ENCODE measurements at regions of chr11 and their contacts with region 1.

Region 1: GRCh38 chr11:67572747-67573419 is 10.7 kb upstream of the GSTP1 start:
- DNase-seq: peak; percentile 84
- ATAC-seq: peak; percentile 89
- H3K4me3 ChIP-seq: 0 out of 2 replicates have a peak overlapping the region, but pooled peaks have one; percentile 13
- H3K27ac ChIP-seq: no peak overlapping the region
- H3K4me1 ChIP-seq: peaks cover 10% of the 10 kb centered on the region
- H3K27me3 ChIP-seq: no peaks in the 10 kb centered on the region
- CTCF ChIP-seq: peak; percentile 76

Region 2: GRCh38 chr11:67539550-67539949 is 33.3 kb before region 1 on chr11:
- CTCF ChIA-PET with region 1: no interaction called
- POLR2A ChIA-PET with region 1: no interaction called
- intact Hi-C with region 1: no loop called
- DNase-seq: no peak
- ATAC-seq: no peak
- H3K4me3 ChIP-seq: no peak overlapping the region
- H3K27ac ChIP-seq: no peak overlapping the region
- H3K4me1 ChIP-seq: no peaks in the 10 kb centered on the region
- H3K27me3 ChIP-seq: no peaks in the 10 kb centered on the region
- CTCF ChIP-seq: no peak

Region 3: DNA sequence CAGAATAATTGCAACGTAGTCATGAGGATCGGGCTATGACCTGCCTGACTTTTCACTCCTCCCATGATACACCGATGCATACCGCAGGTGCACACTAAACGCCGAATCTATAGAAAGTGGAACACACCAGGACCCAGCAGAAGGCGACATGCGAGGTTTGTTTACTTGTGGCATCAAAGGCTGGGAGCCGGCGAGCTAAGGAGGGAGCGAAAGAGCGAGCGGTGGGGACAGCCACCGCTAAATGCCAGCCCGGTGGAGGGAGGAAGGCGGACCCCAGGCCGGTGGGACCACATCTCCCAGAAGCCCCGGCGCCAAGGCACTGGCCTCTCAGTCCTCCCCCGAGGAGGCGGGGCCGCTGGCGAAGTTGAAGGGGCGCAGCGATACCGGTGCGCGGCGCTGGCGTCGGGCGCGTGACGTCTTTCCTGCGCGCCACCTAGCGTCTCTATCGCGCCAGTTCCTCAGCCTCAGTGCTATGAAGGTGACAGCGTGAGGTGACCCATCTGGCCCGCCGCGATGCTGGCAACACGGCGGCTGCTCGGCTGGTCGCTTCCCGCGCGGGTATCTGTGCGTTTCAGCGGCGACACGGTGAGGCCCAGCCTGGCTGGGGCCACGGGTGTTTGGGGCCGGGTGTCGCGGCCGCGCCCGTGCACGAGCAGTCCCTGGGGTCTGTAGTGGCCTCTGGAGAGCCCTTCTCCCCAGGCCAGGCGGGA is 33.8 kb after region 1 on chr11 and contains the start of gene NDUFV1:
- CTCF ChIA-PET with region 1: no interaction called
- POLR2A ChIA-PET with region 1: no interaction called
- intact Hi-C with region 1: loop called (anchors 1 kb)
- DNase-seq: peak; percentile 98
- ATAC-seq: peak; percentile 99
- H3K4me3 ChIP-seq: peak within 1 kb of the TSS; percentile 92
- H3K27ac ChIP-seq: no peak within 1 kb of the TSS
- H3K4me1 ChIP-seq: peaks cover 16% of the 10 kb centered on the region; the same call in 1 of the 2 replicates
- H3K27me3 ChIP-seq: no peaks in the 10 kb centered on the region
- CTCF ChIP-seq: peak; percentile 63
- total RNA-seq, gene NDUFV1: 499 and 686 TPM in 2 replicates

Region 4: GRCh38 chr11:67656278-67656922 is 83.5 kb after region 1 on chr11:
- CTCF ChIA-PET with region 1: interaction called, 3 read pairs
- POLR2A ChIA-PET with region 1: no interaction called
- intact Hi-C with region 1: loop called (anchors 5 kb)
- DNase-seq: no peak
- ATAC-seq: no peak
- H3K4me3 ChIP-seq: no peak overlapping the region
- H3K27ac ChIP-seq: no peak overlapping the region
- H3K4me1 ChIP-seq: peaks cover 17% of the 10 kb centered on the region
- H3K27me3 ChIP-seq: no peaks in the 10 kb centered on the region
- CTCF ChIP-seq: no peak